ENCODE measurements at regions of chr7 and their contacts with region 1.

Region 1: GRCh38 chr7:39732837-39733804 is 109.7 kb downstream of the RALA start:
- DNase-seq: peak; percentile 100
- ATAC-seq: peak; percentile 94
- H3K4me3 Mint-ChIP-seq: peak overlapping the region; percentile 96
- H3K27ac Mint-ChIP-seq: peak overlapping the region; percentile 90
- H3K4me1 Mint-ChIP-seq: peaks cover 38% of the 10 kb centered on the region
- H3K27me3 Mint-ChIP-seq: no peaks in the 10 kb centered on the region
- CTCF ChIP-seq: no peak

Region 2: DNA sequence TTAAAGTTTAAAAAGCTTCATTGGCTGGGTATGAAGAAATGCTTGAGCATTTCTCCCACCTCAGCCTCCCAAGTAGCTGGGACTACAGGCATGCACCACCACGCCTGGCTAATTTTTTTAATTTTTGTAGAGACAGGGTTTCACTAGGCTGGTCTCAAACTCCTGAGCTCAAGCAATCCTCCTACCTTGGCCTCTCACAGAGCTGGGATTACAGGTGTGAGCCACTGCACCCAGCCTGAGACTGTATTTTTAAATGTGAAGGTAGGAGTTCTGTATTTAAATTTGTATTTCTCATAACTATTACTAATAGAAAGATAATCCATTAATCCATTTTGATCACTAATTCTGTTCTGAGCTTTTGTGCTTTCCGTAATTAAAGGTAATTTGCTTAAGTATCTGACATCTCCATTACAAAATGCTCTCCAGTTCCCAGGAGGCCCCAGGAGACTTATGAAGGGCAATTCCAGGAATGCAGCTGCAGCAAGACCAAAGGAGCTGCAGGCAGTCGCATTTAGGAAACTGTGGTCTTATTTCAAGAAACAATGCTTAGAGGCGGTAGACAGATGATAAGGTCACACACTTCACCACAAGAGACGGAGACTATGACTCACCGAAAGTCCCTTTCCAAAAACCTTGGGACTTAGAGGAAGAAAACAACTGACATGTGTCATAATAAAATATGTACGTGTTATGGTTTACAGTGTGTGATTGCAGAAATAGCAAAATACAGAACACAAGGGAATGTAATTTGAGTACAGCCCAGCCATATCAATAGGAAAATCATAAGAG is 143.6 kb before region 1 on chr7:
- CTCF ChIA-PET with region 1: no interaction called
- POLR2A ChIA-PET with region 1: interaction called, 3 read pairs
- intact Hi-C with region 1: loop called (anchors 5 kb)
- DNase-seq: peak; percentile 92
- ATAC-seq: peak; percentile 83
- H3K4me3 Mint-ChIP-seq: peak overlapping the region; percentile 34
- H3K27ac Mint-ChIP-seq: peak overlapping the region; percentile 79
- H3K4me1 Mint-ChIP-seq: peaks cover 51% of the 10 kb centered on the region
- H3K27me3 Mint-ChIP-seq: no peaks in the 10 kb centered on the region
- CTCF ChIP-seq: no peak

Region 3: GRCh38 chr7:39633563-39634477 is 99.3 kb before region 1 on chr7:
- CTCF ChIA-PET with region 1: no interaction called
- POLR2A ChIA-PET with region 1: interaction called, 4 read pairs
- intact Hi-C with region 1: loop called (anchors 10 kb)
- DNase-seq: peak; percentile 45
- ATAC-seq: peak; percentile 65
- H3K4me3 Mint-ChIP-seq: peak overlapping the region; percentile 0
- H3K27ac Mint-ChIP-seq: peak overlapping the region; percentile 90
- H3K4me1 Mint-ChIP-seq: peaks cover 81% of the 10 kb centered on the region
- H3K27me3 Mint-ChIP-seq: no peaks in the 10 kb centered on the region
- CTCF ChIP-seq: no peak

Region 4: GRCh38 chr7:39674406-39674805 is 58.7 kb before region 1 on chr7:
- CTCF ChIA-PET with region 1: no interaction called
- POLR2A ChIA-PET with region 1: no interaction called
- intact Hi-C with region 1: no loop called
- DNase-seq: no peak
- ATAC-seq: no peak
- H3K4me3 Mint-ChIP-seq: no peak overlapping the region
- H3K27ac Mint-ChIP-seq: no peak overlapping the region
- H3K4me1 Mint-ChIP-seq: peaks cover 24% of the 10 kb centered on the region
- H3K27me3 Mint-ChIP-seq: no peaks in the 10 kb centered on the region
- CTCF ChIP-seq: no peak

Region 5: GRCh38 chr7:39746103-39746819 is 13.1 kb after region 1 on chr7:
- CTCF ChIA-PET with region 1: interaction called, 47 read pairs
- POLR2A ChIA-PET with region 1: interaction called, 5 read pairs
- intact Hi-C with region 1: no loop called
- DNase-seq: peak; percentile 74
- ATAC-seq: no peak
- H3K4me3 Mint-ChIP-seq: no peak overlapping the region
- H3K27ac Mint-ChIP-seq: peak overlapping the region; percentile 5
- H3K4me1 Mint-ChIP-seq: peaks cover 14% of the 10 kb centered on the region
- H3K27me3 Mint-ChIP-seq: no peaks in the 10 kb centered on the region
- CTCF ChIP-seq: peak; percentile 73

Region 6: DNA sequence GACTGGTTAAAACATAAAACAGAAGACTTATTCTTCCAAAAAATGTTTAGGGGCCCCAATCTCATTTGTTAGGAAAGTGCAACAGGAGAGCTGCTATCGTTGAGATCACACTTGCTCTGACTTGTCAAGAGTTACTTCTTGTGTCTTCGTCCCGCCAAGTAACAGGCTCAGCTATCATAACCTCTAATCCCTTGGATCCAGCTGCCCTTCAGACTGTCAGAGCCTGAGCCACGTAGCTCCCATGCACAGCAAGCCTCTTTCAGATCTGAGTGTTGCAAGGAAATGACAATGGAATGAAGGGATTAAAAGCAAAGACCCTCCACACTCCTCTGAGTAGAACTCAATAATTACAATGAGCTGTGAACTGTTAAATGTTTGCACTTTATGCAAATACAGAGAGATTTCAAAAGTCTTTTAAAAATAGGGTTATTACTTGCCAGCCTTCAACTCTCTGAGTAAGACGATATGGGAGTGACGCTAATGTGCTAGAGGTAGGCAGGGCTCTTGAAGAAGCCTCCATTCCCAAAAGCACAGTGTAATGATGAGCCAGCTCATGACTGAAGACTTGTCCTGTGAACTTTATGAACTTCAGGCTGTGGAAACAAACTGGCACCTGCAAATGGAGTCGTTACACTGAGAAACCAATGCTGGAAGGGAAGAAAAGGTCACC is 188.5 kb after region 1 on chr7:
- CTCF ChIA-PET with region 1: no interaction called
- POLR2A ChIA-PET with region 1: no interaction called
- intact Hi-C with region 1: no loop called
- DNase-seq: no peak
- ATAC-seq: no peak
- H3K4me3 Mint-ChIP-seq: no peak overlapping the region
- H3K27ac Mint-ChIP-seq: no peak overlapping the region
- H3K4me1 Mint-ChIP-seq: no peaks in the 10 kb centered on the region
- H3K27me3 Mint-ChIP-seq: no peaks in the 10 kb centered on the region
- CTCF ChIP-seq: no peak